Panc1 (cell line): ENCODE measurements at regions of chr12 and their contacts with region 1.

Region 1: GRCh38 chr12:54853995-54854566 is at the start of gene MUCL1:
- DNase-seq: peak; percentile 62
- ATAC-seq: peak; percentile 90
- H3K4me3 ChIP-seq: no peak within 1 kb of the TSS
- H3K27ac ChIP-seq: no peak within 1 kb of the TSS
- H3K4me1 ChIP-seq: no peaks in the 10 kb centered on the region
- H3K27me3 ChIP-seq: peaks cover 11% of the 10 kb centered on the region
- CTCF ChIP-seq: peak; percentile 91
- total RNA-seq, gene MUCL1: not detected

Region 2: DNA sequence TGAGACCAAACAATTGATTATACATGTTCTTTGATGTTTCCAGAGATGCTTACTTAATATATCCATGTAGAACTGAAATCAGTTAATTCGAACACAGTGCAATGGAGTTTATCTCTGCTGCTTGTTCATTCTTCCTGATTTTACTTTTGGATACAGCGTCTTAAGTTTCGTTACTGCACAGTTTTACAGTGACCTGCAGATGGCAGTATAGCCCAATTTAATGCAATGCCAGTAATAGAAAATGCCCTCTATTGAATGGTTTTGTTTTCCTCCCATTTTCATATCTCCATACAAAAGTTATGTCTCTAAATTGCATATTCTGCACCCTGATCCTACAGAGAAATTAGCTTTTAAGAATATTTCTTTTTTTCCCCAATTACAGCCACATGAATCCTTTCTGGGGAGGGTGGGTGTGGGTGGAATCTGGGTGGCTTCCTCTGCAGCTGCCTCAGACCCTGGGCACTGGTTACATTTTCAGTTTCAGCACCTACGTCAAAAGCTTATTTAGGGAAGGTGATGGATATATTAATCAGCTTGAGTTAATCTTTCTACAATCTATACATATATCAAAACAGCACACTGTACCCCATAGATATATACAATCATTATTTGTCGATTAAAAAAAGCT is 104.8 kb before region 1 on chr12:
- CTCF ChIA-PET with region 1: no interaction called
- POLR2A ChIA-PET with region 1: no interaction called
- in situ Hi-C with region 1: no loop called
- intact Hi-C with region 1: loop called (anchors 2 kb)
- DNase-seq: peak; percentile 36
- ATAC-seq: 0 out of 2 replicates have a peak, but pooled peaks have one; percentile 78
- H3K4me3 ChIP-seq: no peak overlapping the region
- H3K27ac ChIP-seq: no peak overlapping the region
- H3K4me1 ChIP-seq: no peaks in the 10 kb centered on the region
- H3K27me3 ChIP-seq: no peaks in the 10 kb centered on the region
- CTCF ChIP-seq: peak; percentile 72

Region 3: GRCh38 chr12:54958048-54958658 is 104.1 kb after region 1 on chr12:
- CTCF ChIA-PET with region 1: no interaction called
- POLR2A ChIA-PET with region 1: no interaction called
- in situ Hi-C with region 1: no loop called
- intact Hi-C with region 1: loop called (anchors 5 kb)
- DNase-seq: peak; percentile 64
- ATAC-seq: no peak
- H3K4me3 ChIP-seq: no peak overlapping the region
- H3K27ac ChIP-seq: no peak overlapping the region
- H3K4me1 ChIP-seq: no peaks in the 10 kb centered on the region
- H3K27me3 ChIP-seq: peaks cover 14% of the 10 kb centered on the region
- CTCF ChIP-seq: peak; percentile 64; the same call in 1 of the 2 replicates

Region 4: DNA sequence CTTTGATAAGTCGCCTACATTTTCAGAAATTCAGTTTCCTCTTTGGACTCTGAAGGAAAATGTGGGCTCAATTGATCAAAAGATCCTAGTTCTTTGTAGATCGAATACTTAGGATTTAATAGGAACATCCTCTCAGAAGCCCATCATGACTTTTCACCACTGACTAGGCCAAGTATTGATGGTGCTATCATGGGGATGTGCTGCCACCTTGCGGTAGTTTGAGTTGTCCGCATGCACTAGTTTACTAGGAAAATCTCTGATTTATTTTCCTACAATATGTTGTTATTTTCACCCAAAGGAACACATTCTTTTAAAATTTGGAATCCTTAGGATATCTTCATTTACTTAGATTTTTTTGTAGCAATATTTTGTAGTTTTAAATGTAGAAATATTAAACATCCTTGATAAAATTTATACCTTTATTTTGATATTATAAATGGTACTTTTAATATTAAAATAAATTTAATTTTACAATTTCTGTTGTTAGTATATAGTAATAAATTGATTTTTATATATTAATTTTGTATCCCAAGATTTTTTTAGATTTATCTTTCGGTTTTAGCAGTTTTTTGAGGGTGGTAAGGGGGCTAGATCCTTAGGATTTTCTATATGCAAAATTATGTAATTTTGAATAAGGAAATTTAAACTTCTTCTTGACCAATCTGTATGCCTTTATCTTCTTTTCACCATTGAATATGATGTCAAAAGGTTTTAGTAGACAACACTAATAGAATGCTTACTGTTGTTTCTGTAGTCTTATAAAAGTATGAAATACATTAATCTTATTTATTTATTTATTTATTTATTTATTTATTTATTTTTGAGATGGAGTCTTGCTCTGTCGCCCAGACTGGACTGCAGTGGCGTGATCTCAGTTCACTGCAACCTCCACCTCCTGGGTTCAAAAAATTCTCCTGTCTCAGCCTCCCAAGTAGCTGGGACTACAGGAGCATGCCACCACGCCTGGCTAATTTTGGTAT is 219.3 kb after region 1 on chr12:
- CTCF ChIA-PET with region 1: no interaction called
- POLR2A ChIA-PET with region 1: no interaction called
- in situ Hi-C with region 1: no loop called
- intact Hi-C with region 1: loop called (anchors 10 kb)
- DNase-seq: peak; percentile 39
- ATAC-seq: peak; percentile 79; the same call in 1 of the 2 replicates
- H3K4me3 ChIP-seq: no peak overlapping the region
- H3K27ac ChIP-seq: no peak overlapping the region
- H3K4me1 ChIP-seq: no peaks in the 10 kb centered on the region
- H3K27me3 ChIP-seq: peaks cover 3% of the 10 kb centered on the region; the same call in 1 of the 2 replicates
- CTCF ChIP-seq: peak; percentile 79